Caco-2 (cell line): ENCODE measurements at regions of chr17 and their contacts with region 1.

Region 1: DNA sequence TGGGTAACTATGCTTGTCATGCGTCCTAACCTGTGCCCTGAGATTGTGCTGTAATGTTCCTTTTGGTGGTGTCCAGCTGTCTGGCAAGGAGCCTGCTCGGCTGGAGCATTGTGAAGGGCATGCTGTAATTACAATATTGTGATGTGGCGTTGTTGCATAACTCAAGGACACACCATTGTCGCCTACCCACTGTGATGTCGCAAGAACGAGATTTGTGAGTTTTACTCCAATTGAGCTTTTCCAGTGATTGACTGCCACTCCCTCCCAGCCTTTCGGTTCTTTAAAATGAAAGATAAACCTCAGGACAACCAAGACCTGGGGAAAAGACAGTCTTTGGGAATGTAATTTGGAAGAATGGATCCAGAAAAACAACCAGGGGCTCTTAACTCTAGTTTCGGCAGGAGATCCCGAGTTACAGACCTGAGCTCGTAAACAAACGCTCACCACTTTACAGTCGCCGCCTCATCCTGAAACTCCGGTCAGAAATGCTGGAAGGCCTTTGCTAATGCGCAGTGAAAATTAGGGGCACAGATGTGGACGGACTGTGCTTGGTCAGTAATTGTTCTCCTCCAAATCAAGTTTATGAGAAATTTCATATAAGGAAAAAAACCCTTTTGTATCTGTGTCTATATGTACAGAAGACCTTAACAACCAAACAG is 1.3 kb downstream of the ZNF750 start:
- DNase-seq: peak; percentile 64 to 78
- H3K4me3 ChIP-seq: no peak overlapping the region
- H3K4me3 Mint-ChIP-seq: no peak overlapping the region
- H3K27ac Mint-ChIP-seq: peak overlapping the region; percentile 6
- H3K4me1 ChIP-seq: peaks cover 12% of the 10 kb centered on the region; the same call in 1 of the 2 replicates
- H3K4me1 Mint-ChIP-seq: peaks cover 12% of the 10 kb centered on the region
- H3K27me3 ChIP-seq: no peaks in the 10 kb centered on the region
- H3K27me3 Mint-ChIP-seq: no peaks in the 10 kb centered on the region
- CTCF ChIP-seq: no peak

Region 2: GRCh38 chr17:82751571-82752370 is 86.8 kb before region 1 on chr17 and contains the start of gene TBCD:
- CTCF ChIA-PET with region 1: no interaction called
- POLR2A ChIA-PET with region 1: no interaction called
- intact Hi-C with region 1: no loop called
- DNase-seq: peak; percentile 85 to 89
- H3K4me3 ChIP-seq: peak within 1 kb of the TSS; percentile 93
- H3K4me3 Mint-ChIP-seq: peak within 1 kb of the TSS; percentile 98
- H3K27ac Mint-ChIP-seq: peak within 1 kb of the TSS; percentile 67
- H3K4me1 ChIP-seq: peaks cover 14% of the 10 kb centered on the region
- H3K4me1 Mint-ChIP-seq: peaks cover 18% of the 10 kb centered on the region
- H3K27me3 ChIP-seq: no peaks in the 10 kb centered on the region
- H3K27me3 Mint-ChIP-seq: no peaks in the 10 kb centered on the region
- CTCF ChIP-seq: no peak
- total RNA-seq, gene TBCD: 94.6 and 108 TPM in 2 replicates

Region 3: GRCh38 chr17:82858352-82859126 is 20.0 kb after region 1 on chr17:
- CTCF ChIA-PET with region 1: no interaction called
- POLR2A ChIA-PET with region 1: no interaction called
- intact Hi-C with region 1: loop called (anchors 1 kb)
- DNase-seq: peak; percentile 58 to 62
- H3K4me3 ChIP-seq: no peak overlapping the region
- H3K4me3 Mint-ChIP-seq: no peak overlapping the region
- H3K27ac Mint-ChIP-seq: peak overlapping the region; percentile 23
- H3K4me1 ChIP-seq: peaks cover 25% of the 10 kb centered on the region
- H3K4me1 Mint-ChIP-seq: peaks cover 16% of the 10 kb centered on the region
- H3K27me3 ChIP-seq: no peaks in the 10 kb centered on the region
- H3K27me3 Mint-ChIP-seq: no peaks in the 10 kb centered on the region
- CTCF ChIP-seq: no peak

Region 4: DNA sequence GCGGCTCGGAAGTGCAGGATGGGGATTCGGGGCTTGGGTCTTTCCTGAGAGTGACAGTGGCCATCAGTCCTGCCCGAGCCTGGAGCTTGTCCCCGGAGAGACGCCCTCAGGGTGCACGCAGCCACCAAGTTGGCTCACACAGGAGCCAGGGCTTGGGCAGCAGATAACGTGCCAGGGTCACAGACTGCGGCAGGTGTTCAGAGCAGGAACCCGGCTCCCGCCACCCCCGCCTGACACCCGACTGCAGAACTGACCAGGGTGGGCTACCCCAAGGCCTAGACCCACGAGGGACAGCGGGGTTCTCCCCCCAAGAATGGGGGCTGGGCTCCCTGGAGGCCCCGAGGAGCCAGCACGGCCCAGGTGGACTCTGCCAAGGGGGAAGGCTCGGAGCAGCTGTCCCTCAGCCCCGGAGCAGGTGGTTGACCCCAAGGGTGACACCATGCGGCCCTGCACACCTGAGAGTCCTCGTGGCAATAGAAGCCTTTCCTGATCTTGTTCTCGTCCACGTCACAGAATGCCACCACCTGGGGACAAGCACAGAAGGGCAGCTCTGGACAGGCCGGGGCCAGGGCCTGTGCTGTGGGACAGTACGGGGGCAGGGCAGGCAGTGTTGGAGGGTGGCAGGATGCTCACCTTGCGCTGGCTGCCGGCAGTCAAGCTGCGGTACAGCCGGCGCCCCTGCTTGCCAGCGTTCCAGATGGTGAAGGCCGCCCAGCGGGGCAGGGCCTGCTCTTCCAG is 118.4 kb after region 1 on chr17:
- CTCF ChIA-PET with region 1: no interaction called
- POLR2A ChIA-PET with region 1: no interaction called
- intact Hi-C with region 1: no loop called
- DNase-seq: peak in 1 of 2 experiments; percentile 27
- H3K4me3 ChIP-seq: no peak overlapping the region
- H3K4me3 Mint-ChIP-seq: no peak overlapping the region
- H3K27ac Mint-ChIP-seq: no peak overlapping the region
- H3K4me1 ChIP-seq: no peaks in the 10 kb centered on the region
- H3K4me1 Mint-ChIP-seq: no peaks in the 10 kb centered on the region
- H3K27me3 ChIP-seq: no peaks in the 10 kb centered on the region
- H3K27me3 Mint-ChIP-seq: no peaks in the 10 kb centered on the region
- CTCF ChIP-seq: no peak